ENCODE measurements at regions of chr2 and their contacts with region 1.

Region 1: DNA sequence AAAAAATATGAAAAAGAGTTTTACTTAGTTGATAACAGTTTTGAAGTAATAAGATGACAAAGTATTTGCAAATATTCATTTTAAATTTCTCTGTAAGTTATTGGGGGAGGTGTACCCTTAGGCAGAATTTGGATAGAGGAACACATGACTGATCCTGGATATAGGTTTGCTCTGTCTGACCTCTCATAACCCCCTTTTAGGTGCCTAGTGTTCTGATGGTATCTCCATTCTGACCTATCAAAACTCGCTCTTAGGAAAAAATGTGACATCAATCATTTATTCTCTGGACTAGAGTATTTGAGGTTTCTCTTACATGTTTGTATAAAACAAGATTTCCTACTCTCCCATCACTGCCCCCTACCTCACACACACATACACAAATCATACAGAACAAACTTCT is 16.9 kb upstream of the AGPS start:
- DNase-seq: no peak
- H3K4me3 ChIP-seq: no peak overlapping the region
- H3K27ac ChIP-seq: no peak overlapping the region
- H3K4me1 ChIP-seq: no peaks in the 10 kb centered on the region
- H3K27me3 ChIP-seq: no peaks in the 10 kb centered on the region
- CTCF ChIP-seq: no peak
- POLR2A ChIP-seq: no peak

Region 2: DNA sequence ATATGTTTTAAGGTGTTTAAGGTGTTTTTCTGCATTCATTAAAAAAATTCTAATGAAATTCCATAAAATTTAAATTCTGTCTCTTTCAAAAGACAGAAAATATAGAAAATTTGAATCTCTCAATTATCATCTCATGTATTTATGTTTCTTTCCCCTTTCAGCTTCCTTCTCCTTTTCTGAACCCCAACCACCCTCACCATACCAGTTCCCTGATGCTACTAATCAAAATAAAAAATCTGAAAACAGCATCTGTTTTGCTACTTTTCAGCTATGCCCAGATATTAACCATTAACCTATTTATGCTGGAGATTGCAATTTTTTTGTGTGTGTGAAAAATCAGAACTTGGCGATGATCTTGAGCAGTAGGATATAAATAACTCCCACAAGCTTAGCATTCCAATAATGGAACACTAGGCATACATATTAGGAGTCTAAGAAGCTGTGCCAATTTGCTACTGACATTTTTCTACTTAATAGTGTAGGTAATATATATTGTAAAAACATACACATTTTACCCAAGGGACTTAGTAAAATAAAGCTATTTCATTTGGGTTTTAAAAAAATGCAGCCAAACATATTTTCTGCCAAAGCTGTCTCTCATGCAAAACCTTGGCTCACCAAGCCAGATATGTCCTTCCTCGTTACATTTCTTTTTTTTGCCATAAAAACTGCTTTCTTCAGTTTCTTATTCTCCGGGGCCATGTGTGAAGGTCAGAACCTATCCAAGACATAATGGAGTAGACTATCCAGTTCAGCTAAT is 15.6 kb before region 1 on chr2:
- intact Hi-C with region 1: loop called (anchors 1 kb)
- DNase-seq: no peak
- H3K4me3 ChIP-seq: no peak overlapping the region
- H3K27ac ChIP-seq: no peak overlapping the region
- H3K4me1 ChIP-seq: no peaks in the 10 kb centered on the region
- H3K27me3 ChIP-seq: no peaks in the 10 kb centered on the region
- CTCF ChIP-seq: no peak
- POLR2A ChIP-seq: no peak

Region 3: DNA sequence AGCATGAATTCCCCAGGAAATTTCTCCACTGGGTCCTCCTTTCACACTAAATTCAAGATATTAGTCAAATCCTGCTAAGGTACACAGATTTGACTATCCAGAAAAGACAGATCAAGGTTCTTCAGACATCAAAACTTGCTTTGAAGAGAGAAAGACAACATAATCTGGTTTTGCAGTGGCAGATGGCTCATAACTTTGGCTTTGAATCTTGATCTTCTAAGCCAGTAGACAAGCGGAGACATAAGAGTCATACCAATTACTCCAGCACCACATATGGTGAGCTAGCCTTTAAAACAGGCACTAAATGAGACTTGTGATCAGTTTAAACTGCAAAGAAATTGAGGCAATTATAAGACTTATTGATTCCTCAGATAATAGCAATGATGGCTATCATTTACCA is 667.6 kb after region 1 on chr2:
- intact Hi-C with region 1: loop called (anchors 10 kb)
- DNase-seq: no peak
- H3K4me3 ChIP-seq: no peak overlapping the region
- H3K27ac ChIP-seq: no peak overlapping the region
- H3K4me1 ChIP-seq: no peaks in the 10 kb centered on the region
- H3K27me3 ChIP-seq: no peaks in the 10 kb centered on the region
- CTCF ChIP-seq: no peak
- POLR2A ChIP-seq: no peak